ENCODE measurements at regions of chr22 and their contacts with region 1.

Region 1: DNA sequence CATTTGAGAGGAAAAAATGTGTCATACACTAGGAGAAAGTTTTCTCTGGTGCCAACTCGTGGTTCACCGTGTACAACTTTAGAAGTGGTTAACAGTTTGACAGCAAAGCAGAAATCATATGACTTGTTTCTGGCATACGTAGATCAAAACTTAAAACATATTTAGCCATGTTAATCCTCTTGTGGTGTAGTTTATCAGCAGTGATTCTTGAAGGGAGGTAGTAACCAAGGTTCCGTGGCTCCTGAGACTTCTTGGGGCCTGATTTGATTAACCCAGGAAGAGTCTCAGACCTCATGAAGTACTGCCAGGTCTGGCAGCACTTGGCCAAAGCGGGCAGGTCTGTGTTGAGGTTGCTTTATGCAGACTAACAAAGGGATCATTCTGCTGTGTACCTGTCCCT is 40.5 kb downstream of the SREBF2 start:
- DNase-seq: peak; percentile 67
- ATAC-seq: peak; percentile 85
- H3K4me3 Mint-ChIP-seq: peak overlapping the region; percentile 0
- H3K27ac Mint-ChIP-seq: peak overlapping the region; percentile 70
- H3K4me1 Mint-ChIP-seq: peaks cover 52% of the 10 kb centered on the region
- H3K27me3 Mint-ChIP-seq: no peaks in the 10 kb centered on the region
- CTCF ChIP-seq: no peak

Region 2: GRCh38 chr22:41237707-41238569 is 635.5 kb before region 1 on chr22:
- CTCF ChIA-PET with region 1: no interaction called
- POLR2A ChIA-PET with region 1: no interaction called
- intact Hi-C with region 1: no loop called
- DNase-seq: peak; percentile 86
- ATAC-seq: peak; percentile 96
- H3K4me3 Mint-ChIP-seq: peak overlapping the region; percentile 59
- H3K27ac Mint-ChIP-seq: no peak overlapping the region
- H3K4me1 Mint-ChIP-seq: peaks cover 7% of the 10 kb centered on the region
- H3K27me3 Mint-ChIP-seq: no peaks in the 10 kb centered on the region
- CTCF ChIP-seq: peak; percentile 12

Region 3: GRCh38 chr22:41589391-41590241 is 283.8 kb before region 1 on chr22 and contains the start of gene PMM1:
- CTCF ChIA-PET with region 1: no interaction called
- POLR2A ChIA-PET with region 1: no interaction called
- intact Hi-C with region 1: no loop called
- DNase-seq: peak; percentile 100
- ATAC-seq: peak; percentile 98
- H3K4me3 Mint-ChIP-seq: peak within 1 kb of the TSS; percentile 95
- H3K27ac Mint-ChIP-seq: peak within 1 kb of the TSS; percentile 88
- H3K4me1 Mint-ChIP-seq: peaks cover 12% of the 10 kb centered on the region
- H3K27me3 Mint-ChIP-seq: no peaks in the 10 kb centered on the region
- CTCF ChIP-seq: no peak
- total RNA-seq, gene PMM1: 29.8 to 29.9 TPM

Region 4: GRCh38 chr22:41808400-41808799 is 65.0 kb before region 1 on chr22:
- CTCF ChIA-PET with region 1: no interaction called
- POLR2A ChIA-PET with region 1: no interaction called
- intact Hi-C with region 1: no loop called
- DNase-seq: no peak
- ATAC-seq: no peak
- H3K4me3 Mint-ChIP-seq: no peak overlapping the region
- H3K27ac Mint-ChIP-seq: no peak overlapping the region
- H3K4me1 Mint-ChIP-seq: peaks cover 7% of the 10 kb centered on the region
- H3K27me3 Mint-ChIP-seq: no peaks in the 10 kb centered on the region
- CTCF ChIP-seq: no peak

Region 5: GRCh38 chr22:41832553-41833368 is 40.6 kb before region 1 on chr22 and contains the start of gene SREBF2:
- CTCF ChIA-PET with region 1: interaction called, 4 read pairs
- POLR2A ChIA-PET with region 1: interaction called, 6 read pairs
- intact Hi-C with region 1: loop called (anchors 5 kb)
- DNase-seq: peak; percentile 100
- ATAC-seq: peak; percentile 95
- H3K4me3 Mint-ChIP-seq: peak within 1 kb of the TSS; percentile 92
- H3K27ac Mint-ChIP-seq: peak within 1 kb of the TSS; percentile 100
- H3K4me1 Mint-ChIP-seq: peaks cover 47% of the 10 kb centered on the region
- H3K27me3 Mint-ChIP-seq: no peaks in the 10 kb centered on the region
- CTCF ChIP-seq: no peak
- total RNA-seq, gene SREBF2: 87.1 to 92.9 TPM

Region 6: DNA sequence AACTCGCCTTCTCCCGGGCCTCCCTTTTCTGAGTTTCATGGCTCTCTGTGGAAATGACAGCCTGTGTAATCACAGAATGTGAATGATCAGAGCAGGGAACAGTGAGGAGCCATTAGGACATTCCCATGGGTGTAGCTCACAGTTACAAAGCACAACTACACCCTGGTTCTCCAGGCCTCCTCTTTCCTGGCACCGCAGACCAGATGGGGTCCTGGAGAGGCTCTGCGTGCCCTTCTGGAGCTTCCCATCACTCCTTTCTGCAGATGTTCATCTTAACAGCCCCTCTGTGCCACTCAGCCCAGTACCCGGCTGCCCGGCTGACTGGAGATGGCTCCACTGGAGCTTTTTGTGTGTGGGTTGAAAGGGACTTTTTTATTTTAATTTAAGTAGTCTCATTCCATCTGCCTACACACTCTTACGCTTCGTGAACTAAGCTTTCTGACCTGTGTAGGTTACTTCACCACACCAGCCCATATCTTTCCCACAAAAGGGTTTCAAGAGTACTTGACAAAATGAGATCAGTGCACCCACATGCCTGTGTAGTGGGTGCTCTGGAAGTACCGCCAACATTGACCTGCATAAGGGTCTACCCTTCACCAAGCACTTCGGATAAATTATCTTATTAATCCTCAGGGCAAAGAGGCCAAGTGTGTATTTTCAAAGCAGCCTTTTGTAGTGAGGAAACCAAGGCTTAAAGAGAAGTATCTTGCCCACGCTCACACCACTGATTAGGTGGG is 10.7 kb before region 1 on chr22:
- CTCF ChIA-PET with region 1: interaction called, 18 read pairs
- POLR2A ChIA-PET with region 1: interaction called, 44 read pairs
- intact Hi-C with region 1: loop called (anchors 1 kb)
- DNase-seq: peak; percentile 80
- ATAC-seq: peak; percentile 71
- H3K4me3 Mint-ChIP-seq: peak overlapping the region; percentile 65
- H3K27ac Mint-ChIP-seq: peak overlapping the region; percentile 98
- H3K4me1 Mint-ChIP-seq: peaks cover 65% of the 10 kb centered on the region
- H3K27me3 Mint-ChIP-seq: no peaks in the 10 kb centered on the region
- CTCF ChIP-seq: no peak

Region 7: DNA sequence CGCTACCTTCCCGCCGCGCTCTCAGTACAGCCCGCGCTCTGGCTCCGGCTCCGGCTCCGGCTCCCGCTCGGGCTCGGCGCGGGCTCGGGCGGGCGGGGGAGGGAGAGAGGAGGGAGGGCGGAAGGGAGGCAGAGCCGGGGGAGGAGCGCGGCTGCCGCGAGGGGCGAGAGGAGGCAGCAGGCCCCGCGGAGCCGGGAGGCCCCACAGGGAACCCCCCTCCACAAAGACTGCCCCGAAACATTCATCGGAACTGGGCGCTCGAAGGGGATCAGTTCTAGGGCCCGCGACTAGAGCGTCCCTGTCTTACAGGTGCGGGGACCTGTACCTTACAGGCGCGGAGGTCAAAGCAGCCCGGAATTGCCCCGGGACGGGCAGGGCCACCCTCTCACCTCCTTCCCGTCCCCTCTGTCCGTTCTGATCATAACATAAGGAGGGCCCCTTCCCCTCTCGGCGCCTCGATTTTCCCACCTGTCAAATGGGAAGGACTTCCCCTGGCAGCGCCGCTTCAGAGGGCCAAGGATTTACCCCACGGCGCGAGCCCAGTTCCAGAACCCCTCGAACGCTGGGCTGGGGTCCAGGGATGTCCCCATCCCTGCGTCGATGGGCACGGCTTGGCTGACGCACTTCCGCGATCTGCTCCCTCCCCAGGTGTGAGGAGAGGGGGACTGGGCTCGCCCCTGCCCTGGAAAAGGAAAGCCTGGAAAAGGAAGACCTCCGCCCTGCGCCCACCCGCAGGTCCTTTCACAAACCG is 41.8 kb after region 1 on chr22 and contains the start of gene SHISA8:
- CTCF ChIA-PET with region 1: no interaction called
- POLR2A ChIA-PET with region 1: no interaction called
- intact Hi-C with region 1: no loop called
- DNase-seq: peak; percentile 64
- ATAC-seq: peak; percentile 48
- H3K4me3 Mint-ChIP-seq: peak within 1 kb of the TSS; percentile 36
- H3K27ac Mint-ChIP-seq: no peak within 1 kb of the TSS
- H3K4me1 Mint-ChIP-seq: peaks cover 21% of the 10 kb centered on the region
- H3K27me3 Mint-ChIP-seq: peaks cover 46% of the 10 kb centered on the region
- CTCF ChIP-seq: no peak
- total RNA-seq, gene SHISA8: 2.3 to 2.7 TPM

Measured in activated CD8-positive, alpha-beta T cell treated with anti-CD3 and anti-CD28 coated beads for 36 hours (primary cell).